Activated naive CD4-positive, alpha-beta T cell treated with anti-CD3 and anti-CD28 coated beads for 36 hours (primary cell): ENCODE measurements at regions of chr4 and their contacts with region 1.

Region 1: GRCh38 chr4:184514121-184514988 is 40.0 kb upstream of the IRF2 start:
- DNase-seq: peak; percentile 86
- H3K4me3 Mint-ChIP-seq: peak overlapping the region; percentile 23
- H3K27ac Mint-ChIP-seq: peak overlapping the region; percentile 66
- H3K4me1 Mint-ChIP-seq: peaks cover 35% of the 10 kb centered on the region
- H3K27me3 Mint-ChIP-seq: no peaks in the 10 kb centered on the region

Region 2: GRCh38 chr4:184287697-184288255 is 226.6 kb before region 1 on chr4:
- CTCF ChIA-PET with region 1: interaction called, 10 read pairs
- intact Hi-C with region 1: loop called (anchors 1 kb)
- DNase-seq: no peak
- H3K4me3 Mint-ChIP-seq: no peak overlapping the region
- H3K27ac Mint-ChIP-seq: no peak overlapping the region
- H3K4me1 Mint-ChIP-seq: peaks cover 52% of the 10 kb centered on the region
- H3K27me3 Mint-ChIP-seq: peaks cover 4% of the 10 kb centered on the region

Region 3: GRCh38 chr4:184479516-184479950 is 34.8 kb before region 1 on chr4:
- CTCF ChIA-PET with region 1: interaction called, 8 read pairs
- intact Hi-C with region 1: loop called (anchors 1 kb)
- DNase-seq: no peak
- H3K4me3 Mint-ChIP-seq: no peak overlapping the region
- H3K27ac Mint-ChIP-seq: no peak overlapping the region
- H3K4me1 Mint-ChIP-seq: peaks cover 56% of the 10 kb centered on the region
- H3K27me3 Mint-ChIP-seq: no peaks in the 10 kb centered on the region

Region 4: DNA sequence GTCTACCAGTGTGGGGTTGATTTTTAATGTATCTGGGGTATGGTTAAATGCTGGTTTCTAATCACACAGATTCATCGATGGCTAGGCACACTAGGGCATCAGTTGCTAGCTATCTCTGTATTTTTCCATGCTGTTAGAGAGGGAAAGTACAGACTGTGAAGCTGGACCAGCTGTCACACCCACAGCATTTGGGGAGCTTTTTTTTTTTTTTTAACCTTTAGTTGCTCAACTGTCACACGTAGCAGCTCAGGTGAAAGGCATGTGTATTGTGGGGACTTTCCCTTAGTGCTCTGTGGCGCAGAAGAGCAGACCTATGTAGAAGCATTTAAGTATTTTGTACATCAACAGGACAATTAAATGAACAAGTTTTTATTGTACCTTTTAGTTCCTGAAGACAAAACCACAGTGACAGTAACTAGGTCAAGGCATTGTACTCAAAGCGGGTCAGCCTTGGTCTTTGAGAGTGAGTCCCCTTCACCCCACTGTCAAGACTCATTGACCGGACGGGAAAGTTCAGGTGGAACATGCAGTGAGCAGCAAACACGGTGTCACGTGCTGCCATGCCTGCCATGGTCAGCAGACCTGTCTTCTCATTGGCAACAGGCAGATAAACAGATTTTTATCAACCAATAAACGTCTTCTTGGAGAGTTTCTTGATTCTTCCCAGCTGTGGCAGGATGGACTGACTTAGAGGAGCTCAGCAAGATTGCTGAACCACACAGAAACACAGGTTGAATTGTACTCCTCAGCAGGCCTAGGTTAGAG is 69.6 kb after region 1 on chr4:
- CTCF ChIA-PET with region 1: no interaction called
- intact Hi-C with region 1: loop called (anchors 2 kb)
- DNase-seq: peak; percentile 62
- H3K4me3 Mint-ChIP-seq: no peak overlapping the region
- H3K27ac Mint-ChIP-seq: peak overlapping the region; percentile 20
- H3K4me1 Mint-ChIP-seq: peaks cover 25% of the 10 kb centered on the region
- H3K27me3 Mint-ChIP-seq: no peaks in the 10 kb centered on the region